ENCODE measurements at regions of chr6 and their contacts with region 1.

Region 1: GRCh38 chr6:122839477-122839876 is 50.4 kb downstream of the SMPDL3A start:
- DNase-seq: peak; percentile 48 to 54
- H3K4me3 ChIP-seq: no peak overlapping the region
- H3K27ac ChIP-seq: no peak overlapping the region
- H3K4me1 ChIP-seq: no peaks in the 10 kb centered on the region
- H3K27me3 ChIP-seq: no peaks in the 10 kb centered on the region
- CTCF ChIP-seq: peak; percentile 88

Region 2: GRCh38 chr6:122033539-122034181 is 805.8 kb before region 1 on chr6:
- CTCF ChIA-PET with region 1: no interaction called
- POLR2A ChIA-PET with region 1: no interaction called
- intact Hi-C with region 1: loop called (anchors 5 kb)
- DNase-seq: peak in 1 of 2 experiments; percentile 76
- H3K4me3 ChIP-seq: no peak overlapping the region
- H3K27ac ChIP-seq: no peak overlapping the region
- H3K4me1 ChIP-seq: peaks cover 13% of the 10 kb centered on the region
- H3K27me3 ChIP-seq: no peaks in the 10 kb centered on the region
- CTCF ChIP-seq: peak; percentile 92

Region 3: DNA sequence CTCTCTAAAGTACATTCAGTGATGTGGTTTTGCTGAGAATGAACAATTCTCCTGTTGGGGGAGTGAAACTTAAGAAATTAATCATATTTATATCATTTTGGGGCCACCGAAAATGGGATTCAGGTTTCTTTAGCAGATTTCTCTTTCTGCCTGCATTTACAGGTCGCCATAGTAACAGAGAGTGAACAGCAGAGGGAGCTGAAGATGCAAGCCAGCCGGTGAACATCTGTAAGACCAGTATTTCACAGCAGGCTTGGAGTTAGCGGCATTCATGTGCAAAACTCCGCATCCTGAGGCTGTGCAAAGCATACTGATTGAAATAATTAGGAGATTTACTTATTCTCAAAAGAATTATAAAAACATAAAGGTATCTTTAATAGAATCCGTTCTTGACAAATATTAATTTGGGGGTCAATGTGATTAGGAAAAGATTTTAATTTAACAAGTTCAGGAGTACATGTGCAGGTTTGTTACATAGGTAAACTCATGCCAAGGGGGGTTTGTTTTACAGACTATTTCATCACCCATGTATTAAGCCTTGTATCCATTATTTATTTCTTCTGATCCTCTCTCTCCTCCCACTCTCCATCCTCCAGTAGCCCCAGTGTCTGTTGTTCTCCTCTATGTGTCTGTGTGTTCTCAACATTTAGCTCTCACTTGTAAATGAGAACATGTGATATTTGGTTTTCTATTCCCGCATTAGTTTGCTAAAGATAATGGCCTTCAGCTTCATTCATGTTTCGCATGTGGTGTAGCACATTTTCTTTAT is 457.8 kb before region 1 on chr6:
- CTCF ChIA-PET with region 1: no interaction called
- POLR2A ChIA-PET with region 1: no interaction called
- intact Hi-C with region 1: loop called (anchors 5 kb)
- DNase-seq: peak in 1 of 2 experiments; percentile 34
- H3K4me3 ChIP-seq: no peak overlapping the region
- H3K27ac ChIP-seq: no peak overlapping the region
- H3K4me1 ChIP-seq: 0 out of 2 replicates have a peak, but pooled peaks cover 2% of the 10 kb centered on the region
- H3K27me3 ChIP-seq: no peaks in the 10 kb centered on the region
- CTCF ChIP-seq: peak; percentile 84

Region 4: DNA sequence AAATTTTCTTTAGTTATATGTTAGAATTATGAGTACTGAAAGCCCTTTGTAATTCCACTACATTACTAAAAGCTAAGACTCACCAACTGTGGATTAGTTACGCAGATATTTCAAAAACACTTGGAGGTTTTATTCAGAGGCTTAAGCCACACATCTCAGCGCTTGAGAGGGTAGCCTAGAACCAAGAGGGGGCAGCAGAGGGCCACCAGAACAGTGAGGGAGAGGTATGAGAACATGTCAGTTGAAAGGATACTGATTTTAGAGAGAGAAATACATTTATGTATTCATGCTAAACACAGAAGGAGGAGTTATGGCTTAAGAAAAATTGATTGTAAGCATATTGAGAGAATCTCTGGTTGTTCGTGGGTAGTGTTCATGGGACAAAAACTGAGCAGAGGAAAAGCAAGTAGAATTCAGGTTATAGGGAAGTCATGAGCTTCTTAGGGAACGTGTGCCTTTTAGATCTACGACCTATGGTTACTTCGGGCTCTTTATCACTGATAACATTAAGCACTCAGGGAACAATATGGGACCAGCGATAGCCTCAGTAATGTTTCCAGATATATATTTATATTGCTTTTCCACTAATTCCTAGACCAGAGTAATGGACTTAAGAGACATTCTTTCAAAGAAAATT is 347.4 kb before region 1 on chr6:
- CTCF ChIA-PET with region 1: interaction called, 3 read pairs
- POLR2A ChIA-PET with region 1: no interaction called
- intact Hi-C with region 1: loop called (anchors 1 kb)
- DNase-seq: peak; percentile 54 to 62
- H3K4me3 ChIP-seq: no peak overlapping the region
- H3K27ac ChIP-seq: no peak overlapping the region
- H3K4me1 ChIP-seq: peaks cover 13% of the 10 kb centered on the region
- H3K27me3 ChIP-seq: no peaks in the 10 kb centered on the region
- CTCF ChIP-seq: peak; percentile 96

Region 5: GRCh38 chr6:122609856-122610689 is 229.4 kb before region 1 on chr6 and contains the start of gene PKIB:
- CTCF ChIA-PET with region 1: interaction called, 3 read pairs
- POLR2A ChIA-PET with region 1: no interaction called
- intact Hi-C with region 1: loop called (anchors 2 kb)
- DNase-seq: peak; percentile 82 to 84
- H3K4me3 ChIP-seq: peak within 1 kb of the TSS; percentile 87
- H3K27ac ChIP-seq: peak within 1 kb of the TSS; percentile 65
- H3K4me1 ChIP-seq: peaks cover 23% of the 10 kb centered on the region
- H3K27me3 ChIP-seq: no peaks in the 10 kb centered on the region
- CTCF ChIP-seq: no peak; the same call in none of the 2 replicates
- total RNA-seq, gene PKIB: 4.8 and 7.0 TPM in 2 replicates

Region 6: GRCh38 chr6:122730775-122731386 is 108.6 kb before region 1 on chr6:
- CTCF ChIA-PET with region 1: interaction called, 18 read pairs
- POLR2A ChIA-PET with region 1: no interaction called
- intact Hi-C with region 1: loop called (anchors 1 kb)
- DNase-seq: no peak
- H3K4me3 ChIP-seq: no peak overlapping the region
- H3K27ac ChIP-seq: no peak overlapping the region
- H3K4me1 ChIP-seq: no peaks in the 10 kb centered on the region
- H3K27me3 ChIP-seq: no peaks in the 10 kb centered on the region
- CTCF ChIP-seq: peak; percentile 95

Region 7: DNA sequence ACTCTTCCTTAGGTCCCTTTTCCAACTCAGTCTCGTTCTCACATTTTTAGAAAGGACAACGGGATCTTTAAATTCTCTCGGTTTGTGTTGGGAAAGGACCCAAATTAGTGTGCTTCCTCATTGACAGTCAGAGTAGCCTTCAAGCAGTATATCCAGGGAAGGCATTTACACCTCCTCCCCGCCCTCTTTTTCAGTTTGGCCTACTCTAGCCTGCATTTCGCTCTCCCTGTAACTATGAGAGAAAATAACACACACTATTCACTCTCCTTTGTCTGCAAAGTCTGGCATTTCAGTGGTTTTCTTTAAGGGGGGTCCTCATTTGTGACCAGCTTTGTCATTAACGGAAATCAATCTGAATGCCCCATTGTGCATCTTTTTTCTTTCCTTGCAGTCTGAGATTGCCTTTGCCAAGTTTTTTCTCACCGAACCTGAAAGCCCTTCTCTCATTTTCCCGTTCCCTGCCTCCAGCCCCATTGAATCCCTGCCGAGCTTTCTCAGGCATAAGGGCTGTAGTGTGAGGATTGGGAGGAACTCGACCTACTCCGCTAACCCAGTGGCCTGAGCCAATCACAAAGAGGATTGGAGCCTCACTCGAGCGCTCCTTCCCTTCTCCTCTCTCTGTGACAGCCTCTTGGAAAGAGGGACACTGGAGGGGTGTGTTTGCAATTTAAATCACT is 60.4 kb before region 1 on chr6:
- CTCF ChIA-PET with region 1: no interaction called
- POLR2A ChIA-PET with region 1: no interaction called
- intact Hi-C with region 1: no loop called
- DNase-seq: no peak
- H3K4me3 ChIP-seq: no peak overlapping the region
- H3K27ac ChIP-seq: no peak overlapping the region
- H3K4me1 ChIP-seq: no peaks in the 10 kb centered on the region
- H3K27me3 ChIP-seq: no peaks in the 10 kb centered on the region
- CTCF ChIP-seq: no peak

Region 8: DNA sequence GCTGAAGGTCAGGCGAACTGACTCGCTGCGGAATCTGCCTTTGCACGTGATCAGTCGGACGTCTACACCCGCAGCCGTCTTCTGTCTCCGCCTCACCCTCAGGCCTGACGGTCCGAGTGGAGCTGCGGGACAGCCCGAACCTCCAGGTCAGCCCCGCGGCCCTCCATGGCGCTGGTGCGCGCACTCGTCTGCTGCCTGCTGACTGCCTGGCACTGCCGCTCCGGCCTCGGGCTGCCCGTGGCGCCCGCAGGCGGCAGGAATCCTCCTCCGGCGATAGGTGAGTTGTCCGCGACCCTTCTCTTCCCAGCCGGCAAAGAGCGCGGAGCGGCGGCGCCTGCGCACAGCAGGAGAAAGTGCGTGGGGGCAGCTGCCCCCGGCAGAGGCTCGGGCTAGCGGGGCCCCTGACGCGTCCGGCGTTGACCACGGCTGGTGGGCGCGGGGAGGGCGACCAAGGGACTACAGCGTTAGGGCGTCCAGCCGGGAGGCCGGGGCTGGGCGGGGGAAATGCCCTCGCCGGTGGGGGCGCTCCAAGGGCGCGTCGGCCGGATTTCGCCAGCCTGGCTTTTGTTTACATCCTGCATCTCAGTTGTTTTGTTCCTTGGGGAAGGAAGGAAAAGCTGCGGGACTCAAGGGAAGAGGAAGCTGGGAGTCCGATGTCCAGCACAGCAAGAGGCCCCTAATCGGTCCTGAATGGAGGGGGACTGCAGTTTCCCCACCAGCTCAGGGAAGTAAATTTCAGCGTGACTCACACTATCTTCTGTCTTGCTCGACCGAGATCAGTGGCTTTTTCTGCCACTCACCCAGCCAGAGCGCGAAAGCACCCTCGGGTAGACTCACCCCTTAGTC is 50.1 kb before region 1 on chr6 and contains the start of gene SMPDL3A:
- CTCF ChIA-PET with region 1: interaction called, 3 read pairs
- POLR2A ChIA-PET with region 1: no interaction called
- intact Hi-C with region 1: loop called (anchors 5 kb)
- DNase-seq: peak; percentile 72 to 76
- H3K4me3 ChIP-seq: peak within 1 kb of the TSS; percentile 80
- H3K27ac ChIP-seq: peak within 1 kb of the TSS; percentile 64
- H3K4me1 ChIP-seq: peaks cover 22% of the 10 kb centered on the region
- H3K27me3 ChIP-seq: no peaks in the 10 kb centered on the region
- CTCF ChIP-seq: peak; percentile 67; the same call in 1 of the 2 replicates
- total RNA-seq, gene SMPDL3A: 2.4 TPM in 2 replicates

Region 9: DNA sequence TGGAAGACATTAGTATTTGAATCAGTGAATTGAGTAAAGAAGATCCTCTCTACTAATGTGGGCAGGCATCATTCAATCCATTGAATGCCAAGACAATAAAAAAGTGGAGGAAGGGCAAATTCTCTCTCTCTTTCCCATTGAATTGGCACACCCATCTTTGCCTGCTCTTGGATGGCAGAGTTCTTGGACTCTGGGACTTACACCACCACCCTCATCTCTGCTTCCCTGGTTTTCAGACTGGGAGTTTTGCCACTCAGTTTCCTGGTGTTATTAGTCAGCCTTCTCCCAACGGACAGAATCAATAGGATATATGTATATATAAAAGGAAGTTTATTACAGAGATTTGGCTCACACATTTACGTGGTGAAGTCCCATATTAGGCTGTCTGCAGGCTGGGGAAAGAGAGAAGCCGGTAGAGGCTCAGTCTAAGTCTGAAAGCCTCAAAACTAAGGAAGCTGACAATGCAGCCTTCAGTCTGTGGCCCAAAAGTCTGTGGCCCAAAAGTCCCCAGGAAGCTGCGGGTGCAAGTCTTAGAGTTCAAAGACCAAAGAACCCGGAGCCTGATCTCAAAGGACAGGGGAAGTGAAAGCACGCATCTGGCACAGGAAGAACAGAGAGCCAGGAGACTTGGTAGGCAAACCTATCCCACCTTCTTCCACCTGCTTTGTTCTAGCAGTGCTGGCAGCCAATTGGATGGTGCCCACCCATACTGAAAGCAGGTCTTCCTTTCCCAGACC is 13.9 kb after region 1 on chr6:
- CTCF ChIA-PET with region 1: no interaction called
- POLR2A ChIA-PET with region 1: no interaction called
- intact Hi-C with region 1: no loop called
- DNase-seq: no peak
- H3K4me3 ChIP-seq: no peak overlapping the region
- H3K27ac ChIP-seq: no peak overlapping the region
- H3K4me1 ChIP-seq: no peaks in the 10 kb centered on the region
- H3K27me3 ChIP-seq: no peaks in the 10 kb centered on the region
- CTCF ChIP-seq: no peak